ENCODE measurements at regions of chrX and their contacts with region 1.

Region 1: DNA sequence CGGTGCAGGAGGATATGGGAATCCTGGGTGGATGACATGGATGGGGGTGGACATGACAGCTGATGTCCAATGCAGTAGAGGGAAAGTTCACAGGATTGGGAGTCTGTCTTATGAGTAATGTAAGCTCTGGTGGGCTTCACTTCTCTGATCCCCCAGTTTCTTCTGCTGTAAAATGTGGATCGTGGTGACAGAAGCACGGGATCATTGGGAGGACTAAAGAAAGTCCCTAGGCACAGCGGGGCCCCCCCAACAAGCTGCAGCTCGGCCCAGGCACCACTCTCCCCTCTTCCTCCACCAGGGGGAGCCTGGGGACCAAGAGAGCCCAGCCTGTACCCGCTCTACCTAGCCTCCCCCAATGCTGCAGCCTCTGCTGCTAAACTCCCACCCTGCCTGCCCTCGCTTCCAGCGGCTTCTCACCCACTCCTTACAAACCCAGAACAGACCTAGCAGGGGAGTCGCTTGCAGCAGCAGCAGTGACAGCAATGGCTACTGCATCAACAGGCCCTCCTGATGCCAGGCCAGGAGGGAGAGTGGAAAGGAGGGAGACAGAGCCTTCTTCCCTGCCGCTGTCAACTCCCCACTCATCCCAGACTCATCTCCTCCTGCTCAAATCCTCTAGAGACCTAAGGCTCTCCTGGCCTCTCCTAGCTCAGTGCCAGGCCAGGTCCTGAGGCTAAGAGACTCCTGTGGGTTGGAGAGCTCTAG is 36.1 kb upstream of the IQSEC2 start:
- DNase-seq: no peak
- H3K4me3 ChIP-seq: no peak overlapping the region
- H3K27ac ChIP-seq: no peak overlapping the region
- H3K27me3 ChIP-seq: no peaks in the 10 kb centered on the region
- CTCF ChIP-seq: peak; percentile 72

Region 2: GRCh38 chrX:53153581-53153980 is 163.9 kb before region 1 on chrX:
- CTCF ChIA-PET with region 1: no interaction called
- POLR2A ChIA-PET with region 1: no interaction called
- DNase-seq: no peak
- H3K4me3 ChIP-seq: no peak overlapping the region
- H3K27ac ChIP-seq: no peak overlapping the region
- H3K27me3 ChIP-seq: no peaks in the 10 kb centered on the region
- CTCF ChIP-seq: no peak

Region 3: GRCh38 chrX:53284684-53285447 is 32.7 kb before region 1 on chrX:
- CTCF ChIA-PET with region 1: interaction called, 16 read pairs
- POLR2A ChIA-PET with region 1: no interaction called
- DNase-seq: no peak
- H3K4me3 ChIP-seq: no peak overlapping the region
- H3K27ac ChIP-seq: no peak overlapping the region
- H3K27me3 ChIP-seq: no peaks in the 10 kb centered on the region
- CTCF ChIP-seq: peak; percentile 67

Region 4: DNA sequence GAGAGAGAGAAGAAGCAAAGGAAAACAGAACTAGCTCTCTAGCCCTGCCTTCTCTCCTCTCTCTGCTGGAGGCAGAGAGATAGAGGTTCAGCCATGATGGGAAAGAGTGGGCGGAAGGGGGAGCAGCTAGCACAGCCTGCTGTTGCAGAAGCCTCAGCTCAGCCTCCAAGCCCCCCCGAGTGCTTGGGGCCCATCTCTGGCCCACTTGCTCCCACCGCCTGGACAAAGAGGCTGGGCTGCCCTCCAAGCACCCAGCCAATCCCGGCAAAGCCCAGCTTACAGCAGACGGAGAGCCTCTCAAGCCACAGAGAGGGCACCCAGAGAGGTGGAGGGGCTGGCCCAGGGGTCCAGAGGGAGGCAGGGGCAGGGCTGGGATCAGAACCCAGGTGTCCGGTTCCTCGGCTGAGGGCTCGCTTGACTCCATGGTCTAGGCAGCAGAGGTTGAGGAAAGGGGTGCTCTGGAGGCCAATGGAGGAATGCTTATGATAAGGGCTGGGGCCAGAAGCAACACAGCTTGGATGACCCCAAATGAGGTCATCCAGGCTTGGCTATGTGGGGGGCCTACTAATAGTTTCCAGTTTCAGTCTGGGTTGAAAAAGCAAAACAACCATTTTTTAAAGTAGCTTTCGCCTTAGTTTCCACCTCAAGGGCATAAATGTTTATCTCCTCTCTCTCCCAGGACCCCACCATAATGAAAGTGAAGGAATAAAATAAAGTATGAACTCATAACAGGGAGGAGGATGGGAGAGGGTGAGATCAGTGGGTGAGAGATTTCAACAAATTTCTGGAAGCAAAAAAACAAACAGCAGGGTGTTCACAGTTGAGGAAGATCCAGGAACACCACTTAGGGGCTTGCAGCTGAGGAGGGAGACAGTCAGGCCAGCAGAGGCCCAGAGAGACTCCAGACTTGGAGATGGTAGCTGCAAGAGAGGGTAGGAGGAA is 11.2 kb before region 1 on chrX:
- CTCF ChIA-PET with region 1: interaction called, 11 read pairs
- POLR2A ChIA-PET with region 1: no interaction called
- DNase-seq: no peak
- H3K4me3 ChIP-seq: no peak overlapping the region
- H3K27ac ChIP-seq: no peak overlapping the region
- H3K27me3 ChIP-seq: no peaks in the 10 kb centered on the region
- CTCF ChIP-seq: no peak

Region 5: DNA sequence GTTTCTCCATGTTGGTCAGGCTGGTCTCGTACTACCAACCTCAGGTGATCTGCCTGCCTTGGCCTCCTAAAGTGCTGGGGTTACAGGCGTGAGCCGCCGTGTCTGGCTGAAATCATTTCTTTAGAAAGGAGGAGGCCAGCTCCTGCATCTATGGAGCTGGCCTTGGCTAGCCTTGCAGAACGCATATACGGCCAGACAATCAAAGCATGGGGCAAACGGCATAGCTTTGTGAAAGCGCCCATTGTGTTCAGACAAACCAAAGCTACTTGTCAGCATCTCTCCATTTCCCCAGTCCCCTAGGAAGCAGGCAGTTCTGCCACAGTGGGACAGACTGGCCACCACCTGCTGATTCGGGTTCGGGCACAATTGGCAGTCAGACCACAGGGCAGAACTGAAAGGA is 12.8 kb after region 1 on chrX:
- CTCF ChIA-PET with region 1: interaction called, 44 read pairs
- POLR2A ChIA-PET with region 1: no interaction called
- DNase-seq: no peak
- H3K4me3 ChIP-seq: no peak overlapping the region
- H3K27ac ChIP-seq: no peak overlapping the region
- H3K27me3 ChIP-seq: peaks cover 20% of the 10 kb centered on the region
- CTCF ChIP-seq: no peak

Region 6: GRCh38 chrX:53435997-53436396 is 118.5 kb after region 1 on chrX:
- CTCF ChIA-PET with region 1: interaction called, 11 read pairs
- POLR2A ChIA-PET with region 1: no interaction called
- DNase-seq: no peak
- H3K4me3 ChIP-seq: no peak overlapping the region
- H3K27ac ChIP-seq: no peak overlapping the region
- H3K27me3 ChIP-seq: no peaks in the 10 kb centered on the region
- CTCF ChIP-seq: peak; percentile 85

Region 7: DNA sequence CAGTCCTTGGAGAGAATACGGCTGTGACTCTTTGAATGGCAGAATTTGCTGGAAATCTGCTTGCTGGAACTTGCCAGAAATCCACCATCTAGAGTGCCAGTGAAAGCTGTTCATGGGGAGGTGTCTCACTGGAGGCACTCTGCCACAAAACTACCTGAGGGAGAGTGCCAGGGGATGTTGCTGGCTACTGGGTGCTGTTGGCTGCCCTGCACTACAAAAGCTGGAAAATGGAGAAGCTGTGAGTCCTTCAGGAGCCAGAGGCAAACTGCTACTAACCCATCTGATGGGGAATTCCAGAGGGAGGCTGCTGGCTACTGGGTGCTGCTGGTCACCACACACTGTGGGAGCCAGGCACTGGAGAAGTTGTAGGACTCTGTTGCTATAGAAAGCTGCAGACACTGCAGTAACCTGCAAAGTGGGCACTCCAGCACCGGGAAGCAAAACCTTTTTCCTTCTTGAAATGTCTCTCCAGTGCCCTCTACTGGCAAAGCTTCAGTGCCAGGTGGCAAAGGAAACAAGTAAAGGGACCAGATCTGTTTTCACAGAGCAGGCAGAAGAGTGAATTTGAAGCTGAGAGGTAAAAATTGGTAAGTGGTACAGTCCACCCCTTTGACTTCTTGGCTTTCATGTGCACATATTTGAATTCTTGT is 164.4 kb after region 1 on chrX:
- CTCF ChIA-PET with region 1: interaction called, 26 read pairs
- POLR2A ChIA-PET with region 1: interaction called, 3 read pairs
- DNase-seq: peak; percentile 21
- H3K4me3 ChIP-seq: no peak overlapping the region
- H3K27ac ChIP-seq: no peak overlapping the region
- H3K27me3 ChIP-seq: peaks cover 3% of the 10 kb centered on the region
- CTCF ChIP-seq: peak; percentile 76